Calu3 (cell line): ENCODE measurements at regions of chr12 and their contacts with region 1.

Region 1: DNA sequence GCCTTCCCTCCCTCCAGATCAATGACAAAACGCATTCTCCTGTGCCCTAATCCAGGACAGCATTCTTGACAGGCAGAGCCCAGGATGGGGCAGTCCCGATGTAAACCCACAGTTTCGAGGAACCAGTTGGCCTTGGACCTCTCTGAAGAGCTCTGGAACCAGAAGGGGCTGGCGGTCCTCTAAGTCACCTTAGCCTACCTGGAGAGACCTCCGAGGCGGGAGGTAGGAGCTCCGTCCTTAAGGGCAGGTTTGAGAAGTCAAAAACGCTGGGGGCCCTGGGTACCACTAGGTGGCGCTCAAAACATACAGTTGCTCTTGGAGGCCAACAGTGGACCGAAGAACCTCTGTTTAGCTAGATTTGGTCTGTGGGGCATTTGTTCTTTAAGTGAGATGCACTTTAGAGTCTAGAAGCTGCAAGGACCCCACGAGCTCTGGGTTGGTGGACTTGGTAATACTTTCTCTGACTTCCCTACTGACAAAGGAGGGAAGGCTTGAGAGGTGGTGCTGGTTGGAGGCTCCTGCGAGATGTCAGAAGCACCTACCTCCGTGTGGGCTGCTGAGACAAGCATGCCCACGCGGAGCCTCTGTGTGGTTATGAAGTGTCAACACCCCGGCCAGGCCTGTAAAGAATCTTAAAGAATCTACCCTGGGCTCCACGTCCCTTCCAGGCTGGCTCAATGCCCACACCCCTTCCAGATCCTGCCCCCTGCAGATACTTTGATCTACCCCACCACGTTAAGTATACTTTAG is 74.8 kb upstream of the CHST11 start:
- DNase-seq: peak; percentile 90
- H3K4me3 Mint-ChIP-seq: no peak overlapping the region
- H3K27ac Mint-ChIP-seq: no peak overlapping the region
- H3K4me1 Mint-ChIP-seq: peaks cover 16% of the 10 kb centered on the region
- H3K27me3 Mint-ChIP-seq: no peaks in the 10 kb centered on the region
- CTCF ChIP-seq: peak; percentile 96

Region 2: GRCh38 chr12:104215638-104216297 is 166.1 kb before region 1 on chr12 and contains the start of gene TXNRD1:
- CTCF ChIA-PET with region 1: interaction called, 10 read pairs
- intact Hi-C with region 1: no loop called
- DNase-seq: peak; percentile 92
- H3K4me3 Mint-ChIP-seq: peak within 1 kb of the TSS; percentile 76
- H3K27ac Mint-ChIP-seq: peak within 1 kb of the TSS; percentile 52
- H3K4me1 Mint-ChIP-seq: peaks cover 41% of the 10 kb centered on the region
- H3K27me3 Mint-ChIP-seq: no peaks in the 10 kb centered on the region
- CTCF ChIP-seq: peak; percentile 91
- total RNA-seq, gene TXNRD1: 262 and 269 TPM in 2 replicates

Region 3: DNA sequence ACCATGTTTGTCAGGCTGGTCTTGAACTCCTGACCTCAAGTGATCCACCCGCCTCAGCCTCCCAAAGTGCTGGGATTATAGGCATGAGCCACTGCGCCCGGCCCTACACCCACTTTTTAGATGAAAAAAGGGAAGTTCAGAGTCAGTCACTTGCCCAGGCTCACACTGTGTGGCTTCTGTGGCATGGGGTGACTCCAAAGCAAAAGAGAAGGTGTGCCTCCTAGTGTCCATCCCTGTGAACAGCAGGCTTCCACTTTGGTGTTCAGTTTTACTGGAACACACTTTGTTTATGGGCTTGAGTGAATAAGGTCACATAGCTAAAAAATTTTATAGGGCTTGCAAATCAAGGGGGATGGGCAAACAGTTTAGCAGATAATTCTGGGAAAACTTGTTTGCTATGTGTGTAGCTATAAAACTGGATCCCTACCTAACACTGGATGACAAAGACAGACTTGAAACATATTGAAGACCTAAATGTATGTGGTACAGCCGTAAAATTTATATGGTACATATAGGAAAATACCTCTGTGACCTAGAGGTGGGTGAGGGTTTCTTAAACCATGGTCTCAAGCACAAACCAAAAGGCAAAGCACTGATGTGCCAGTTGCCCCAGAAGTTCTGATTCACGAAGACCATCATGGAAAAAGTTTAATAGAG is 23.4 kb before region 1 on chr12:
- CTCF ChIA-PET with region 1: no interaction called
- intact Hi-C with region 1: no loop called
- DNase-seq: peak; percentile 75
- H3K4me3 Mint-ChIP-seq: no peak overlapping the region
- H3K27ac Mint-ChIP-seq: peak overlapping the region; percentile 58
- H3K4me1 Mint-ChIP-seq: peaks cover 16% of the 10 kb centered on the region
- H3K27me3 Mint-ChIP-seq: no peaks in the 10 kb centered on the region
- CTCF ChIP-seq: peak; percentile 84

Region 4: DNA sequence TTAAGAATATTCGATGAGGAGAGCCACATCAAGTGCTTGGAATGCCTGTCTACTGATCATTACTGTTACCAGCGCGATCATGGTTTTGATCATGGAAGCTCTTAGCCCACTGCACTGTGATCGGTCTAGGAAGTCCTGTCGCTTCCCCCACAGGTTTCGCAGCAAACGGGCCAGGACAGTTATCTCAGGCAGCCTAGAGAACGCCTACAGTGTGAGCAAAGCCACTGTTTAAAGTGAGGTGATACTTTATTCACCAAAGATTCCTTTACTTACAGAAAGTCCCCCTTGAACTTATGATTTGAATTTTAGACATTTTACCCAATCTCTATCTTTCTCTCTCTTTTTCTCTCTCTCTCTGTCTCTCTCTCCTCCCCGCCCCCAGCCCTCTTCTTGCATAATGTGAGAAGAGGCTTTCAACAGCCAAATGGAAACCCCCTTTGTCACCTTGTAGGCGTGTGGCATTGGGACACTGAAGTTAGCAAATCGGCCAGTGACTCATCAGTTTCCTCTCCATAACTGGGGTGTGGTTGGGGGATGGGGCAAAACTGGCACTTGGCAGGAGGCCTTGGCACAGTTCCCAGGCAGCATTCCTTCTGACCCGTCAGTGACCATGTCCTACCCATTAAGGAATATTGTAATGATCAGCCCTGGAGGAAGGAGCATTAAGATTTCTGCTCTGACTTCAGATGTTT is 289.6 kb after region 1 on chr12:
- CTCF ChIA-PET with region 1: interaction called, 3 read pairs
- intact Hi-C with region 1: loop called (anchors 10 kb)
- DNase-seq: peak; percentile 99
- H3K4me3 Mint-ChIP-seq: peak overlapping the region; percentile 48
- H3K27ac Mint-ChIP-seq: peak overlapping the region; percentile 90
- H3K4me1 Mint-ChIP-seq: peaks cover 52% of the 10 kb centered on the region
- H3K27me3 Mint-ChIP-seq: peaks cover 15% of the 10 kb centered on the region
- CTCF ChIP-seq: no peak

Region 5: GRCh38 chr12:104710940-104711689 is 329.2 kb after region 1 on chr12:
- CTCF ChIA-PET with region 1: no interaction called
- intact Hi-C with region 1: no loop called
- DNase-seq: no peak
- H3K4me3 Mint-ChIP-seq: no peak overlapping the region
- H3K27ac Mint-ChIP-seq: no peak overlapping the region
- H3K4me1 Mint-ChIP-seq: no peaks in the 10 kb centered on the region
- H3K27me3 Mint-ChIP-seq: peaks cover 88% of the 10 kb centered on the region
- CTCF ChIP-seq: no peak

Region 6: GRCh38 chr12:104877123-104877705 is 495.3 kb after region 1 on chr12:
- CTCF ChIA-PET with region 1: interaction called, 8 read pairs
- intact Hi-C with region 1: loop called (anchors 1 kb)
- DNase-seq: peak; percentile 46
- H3K4me3 Mint-ChIP-seq: no peak overlapping the region
- H3K27ac Mint-ChIP-seq: no peak overlapping the region
- H3K4me1 Mint-ChIP-seq: no peaks in the 10 kb centered on the region
- H3K27me3 Mint-ChIP-seq: no peaks in the 10 kb centered on the region
- CTCF ChIP-seq: peak; percentile 17

Region 7: DNA sequence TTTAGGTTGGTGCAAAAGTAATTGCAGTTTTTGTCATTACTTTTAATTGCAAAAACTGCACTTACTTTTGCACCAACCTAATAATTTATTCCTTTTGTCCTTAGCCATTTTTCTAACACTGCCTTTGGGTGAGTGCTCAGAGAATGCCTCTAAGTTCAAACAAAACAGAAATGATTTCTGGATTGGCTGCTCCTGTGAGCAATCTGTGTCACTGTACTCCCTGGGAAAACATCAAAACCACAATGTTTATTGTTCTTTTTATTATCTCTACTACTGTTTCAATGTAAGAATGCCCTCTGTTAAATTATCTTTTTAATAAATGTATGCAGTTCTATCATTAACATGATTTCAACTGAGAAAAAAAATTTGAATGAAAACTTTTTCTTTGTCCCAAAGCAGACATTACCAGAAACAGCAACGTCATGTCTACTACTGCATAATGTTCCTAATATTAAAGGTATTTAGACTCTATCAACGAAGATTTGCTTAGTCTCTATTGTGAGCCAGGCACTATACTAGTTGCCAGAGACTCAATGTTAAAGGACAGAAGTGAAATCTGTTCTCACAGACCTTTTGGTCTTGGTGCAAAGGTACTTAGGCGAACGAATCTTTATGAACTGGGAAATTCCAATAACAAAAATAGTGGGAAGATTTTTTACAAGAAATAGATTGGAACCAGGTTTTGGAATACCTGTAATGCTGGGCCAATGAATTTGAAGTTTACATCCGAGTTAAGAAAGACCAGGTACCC is 570.0 kb after region 1 on chr12:
- CTCF ChIA-PET with region 1: interaction called, 11 read pairs
- intact Hi-C with region 1: loop called (anchors 5 kb)
- DNase-seq: no peak
- H3K4me3 Mint-ChIP-seq: peak overlapping the region; percentile 55
- H3K27ac Mint-ChIP-seq: peak overlapping the region; percentile 82
- H3K4me1 Mint-ChIP-seq: peaks cover 48% of the 10 kb centered on the region
- H3K27me3 Mint-ChIP-seq: no peaks in the 10 kb centered on the region
- CTCF ChIP-seq: no peak

Region 8: DNA sequence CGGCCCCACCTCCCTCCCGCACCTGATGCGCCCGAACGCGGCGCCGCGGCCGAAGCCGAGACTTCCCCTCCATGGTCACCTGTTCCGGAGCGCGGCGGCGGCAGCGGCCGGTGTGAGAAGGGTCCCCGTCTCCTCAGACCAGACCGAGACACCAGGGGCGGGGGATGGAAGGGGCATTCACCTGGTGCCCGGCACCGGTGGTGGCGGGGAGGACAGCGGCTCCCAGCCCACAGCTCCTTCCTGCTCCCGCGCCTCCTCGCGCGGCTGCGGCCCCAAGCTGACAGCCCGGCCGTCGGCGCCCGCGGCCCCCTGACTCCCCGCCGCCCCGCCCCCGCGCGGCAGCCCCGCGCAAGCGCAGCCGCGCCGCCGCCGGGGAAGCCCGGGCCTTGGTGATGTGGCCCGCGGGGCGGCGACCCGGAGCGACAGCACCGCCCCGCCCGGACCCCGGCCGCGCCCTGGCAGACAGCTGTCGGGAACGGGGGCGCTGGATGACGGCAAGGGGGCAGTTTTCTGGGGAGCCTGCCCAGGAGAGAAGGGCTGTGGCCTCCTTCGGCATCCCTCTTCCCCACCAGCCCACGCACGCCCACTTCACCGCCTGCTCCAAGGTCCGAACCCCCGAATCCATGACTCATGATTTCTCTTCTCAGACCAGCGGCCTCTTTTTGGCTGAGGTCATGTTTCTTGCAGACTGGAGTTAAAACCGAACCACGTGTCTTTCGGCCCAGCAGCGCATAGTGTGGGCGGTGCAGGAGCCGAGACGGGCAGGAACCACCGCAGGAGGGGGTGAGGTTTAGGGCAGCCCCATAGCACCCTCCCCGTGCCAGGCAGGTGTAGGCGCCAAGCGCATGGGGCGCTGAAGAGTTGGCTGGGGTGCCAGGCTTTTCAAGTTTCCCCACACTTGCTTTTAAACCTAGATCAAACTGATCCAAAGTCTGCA is 576.4 kb after region 1 on chr12 and contains the start of gene SLC41A2:
- CTCF ChIA-PET with region 1: interaction called, 11 read pairs
- intact Hi-C with region 1: loop called (anchors 5 kb)
- DNase-seq: peak; percentile 91
- H3K4me3 Mint-ChIP-seq: peak within 1 kb of the TSS; percentile 72
- H3K27ac Mint-ChIP-seq: peak within 1 kb of the TSS; percentile 81
- H3K4me1 Mint-ChIP-seq: peaks cover 40% of the 10 kb centered on the region
- H3K27me3 Mint-ChIP-seq: no peaks in the 10 kb centered on the region
- CTCF ChIP-seq: no peak
- total RNA-seq, gene SLC41A2: 41.5 and 48.1 TPM in 2 replicates